Posterior cingulate gyrus (tissue), 11 donors: ENCODE measurements at regions of chr4 and their contacts with region 1.

Region 1: DNA sequence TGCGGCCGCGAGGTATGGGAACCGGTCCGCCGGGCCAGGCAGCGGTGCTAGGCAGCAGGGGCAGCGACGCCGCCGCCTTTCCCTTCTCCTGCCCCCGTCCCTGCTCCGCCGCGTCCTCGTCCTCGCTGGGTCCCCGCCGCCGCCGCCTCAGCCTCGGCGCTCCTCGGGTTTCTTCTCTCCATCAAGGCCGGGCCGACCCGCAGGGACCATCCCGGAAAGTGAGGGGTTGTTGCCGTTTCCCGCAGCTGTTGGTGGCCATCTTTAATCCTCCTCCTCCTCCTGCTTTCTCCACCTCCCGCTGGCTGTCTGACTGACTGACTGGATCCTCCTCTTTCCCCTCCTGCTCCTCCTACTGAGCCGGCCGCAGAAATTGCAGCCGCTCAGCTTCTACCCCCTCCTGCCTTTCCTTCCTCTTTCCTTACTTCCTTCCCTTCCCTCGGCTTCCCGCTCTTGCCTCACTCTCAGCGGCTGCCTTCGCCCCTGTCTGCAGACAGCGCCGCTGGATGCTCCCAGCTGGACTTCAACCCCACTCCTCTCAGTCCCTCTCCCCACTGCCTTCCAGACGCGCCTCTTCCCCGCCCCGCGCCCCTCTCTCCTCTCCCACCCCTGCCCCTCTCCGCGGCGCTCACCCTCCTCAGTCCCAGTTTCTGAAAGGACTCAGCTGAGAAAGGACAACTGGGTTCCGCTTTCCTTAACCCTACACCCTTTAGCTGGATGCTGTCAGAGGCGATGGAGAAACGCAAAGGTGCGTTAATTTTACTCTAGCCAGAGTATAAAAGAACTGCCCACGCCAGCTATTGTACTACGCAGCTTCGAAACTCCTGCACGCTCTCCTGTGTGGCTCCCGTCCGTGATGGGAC is at the start of gene WDFY3:
- DNase-seq: peak; percentile 73 to 97 (median 82)

Region 2: GRCh38 chr4:84503495-84504437 is 462.8 kb before region 1 on chr4:
- intact Hi-C with region 1: loop called (anchors 5 kb)
- DNase-seq: peak in 1 of 10 donors; percentile 84

Region 3: DNA sequence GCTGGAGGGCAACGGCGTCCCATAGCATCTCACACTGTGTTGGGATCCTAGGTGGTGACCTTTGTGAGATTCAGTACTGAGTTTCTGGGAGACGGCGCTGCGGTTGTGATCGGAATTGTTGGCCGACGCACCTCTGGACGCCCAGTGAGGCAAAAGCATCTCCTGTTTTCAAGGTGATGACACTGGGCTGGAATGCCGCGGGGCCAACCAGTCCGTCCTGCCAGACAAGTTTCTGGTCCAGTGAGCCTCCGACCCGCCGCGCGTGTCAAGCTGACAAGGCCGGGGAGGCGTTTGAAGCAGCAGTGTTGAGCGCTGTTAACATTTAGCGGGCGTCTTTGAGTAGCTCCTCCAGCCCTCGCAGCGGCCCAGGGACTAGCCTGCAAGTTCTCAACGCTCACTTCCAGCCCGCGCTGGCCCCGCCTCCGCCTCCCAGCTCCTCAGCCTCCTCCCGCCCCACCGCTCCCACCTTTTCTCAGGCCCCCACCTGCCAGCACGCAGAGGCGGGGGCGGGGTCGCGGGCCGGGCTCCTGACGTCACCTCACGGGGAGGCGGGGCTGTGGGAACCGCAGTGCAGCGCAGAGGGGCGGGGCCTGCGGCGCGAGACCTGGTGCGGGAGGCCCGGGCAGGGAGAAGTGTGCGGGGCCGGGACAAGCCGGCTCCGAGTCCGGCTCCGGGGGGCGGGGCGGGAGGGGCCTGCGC is 384.2 kb before region 1 on chr4:
- intact Hi-C with region 1: loop called (anchors 5 kb)
- DNase-seq: peak; percentile 83 to 99 (median 90)

Region 4: DNA sequence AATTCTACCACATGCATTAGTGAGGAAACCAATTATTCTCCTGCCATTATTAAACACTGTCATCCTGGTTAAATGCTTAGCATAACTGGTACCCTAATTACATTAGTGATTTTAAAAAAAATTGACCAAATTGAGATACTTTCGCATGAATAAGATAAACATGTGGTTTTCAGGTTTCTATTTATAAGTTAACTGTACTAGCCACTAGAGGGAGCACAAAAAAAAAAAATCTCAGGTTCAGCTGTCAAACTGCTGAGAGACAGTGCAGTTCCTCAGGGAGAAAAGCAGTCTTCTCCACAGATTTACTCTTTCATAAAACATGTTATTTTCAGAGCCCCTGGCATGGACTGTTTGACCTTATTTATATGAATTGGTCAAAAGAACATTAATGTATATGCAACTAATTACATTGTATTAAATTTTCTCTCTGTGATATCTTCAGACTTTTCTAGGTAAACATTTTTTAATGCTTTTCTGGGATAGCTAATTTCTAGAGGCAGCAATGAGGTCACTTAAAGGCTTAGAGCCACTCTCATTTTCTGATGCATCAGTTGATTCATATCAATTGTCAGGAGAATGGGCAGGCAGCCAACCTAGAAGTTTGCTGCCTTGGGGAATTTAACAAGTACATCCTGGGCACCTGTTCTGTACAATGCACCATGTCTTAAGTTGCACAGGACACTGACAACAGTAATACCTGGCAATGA is 216.2 kb before region 1 on chr4:
- intact Hi-C with region 1: loop called (anchors 1 kb)
- DNase-seq: no peak

Region 5: DNA sequence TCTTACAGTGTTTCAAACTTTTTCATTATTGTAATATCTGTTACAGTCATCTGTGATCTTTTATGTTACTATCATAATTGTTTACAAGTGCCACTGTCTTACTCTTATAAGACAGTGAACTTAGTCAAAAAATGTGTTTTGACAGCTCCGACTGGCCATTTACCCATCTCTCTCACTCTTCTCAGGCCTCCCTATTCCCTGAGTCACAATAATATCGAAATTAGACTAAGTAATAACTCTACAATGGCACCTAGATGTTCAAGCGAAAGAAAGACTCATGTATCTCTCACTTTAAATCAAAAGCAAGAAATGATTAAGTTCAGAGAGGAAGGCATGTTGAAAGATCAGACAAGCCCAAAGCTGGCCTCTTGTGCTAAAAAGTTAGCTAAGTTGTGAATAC is 199.4 kb before region 1 on chr4:
- intact Hi-C with region 1: no loop called
- DNase-seq: no peak

Region 6: DNA sequence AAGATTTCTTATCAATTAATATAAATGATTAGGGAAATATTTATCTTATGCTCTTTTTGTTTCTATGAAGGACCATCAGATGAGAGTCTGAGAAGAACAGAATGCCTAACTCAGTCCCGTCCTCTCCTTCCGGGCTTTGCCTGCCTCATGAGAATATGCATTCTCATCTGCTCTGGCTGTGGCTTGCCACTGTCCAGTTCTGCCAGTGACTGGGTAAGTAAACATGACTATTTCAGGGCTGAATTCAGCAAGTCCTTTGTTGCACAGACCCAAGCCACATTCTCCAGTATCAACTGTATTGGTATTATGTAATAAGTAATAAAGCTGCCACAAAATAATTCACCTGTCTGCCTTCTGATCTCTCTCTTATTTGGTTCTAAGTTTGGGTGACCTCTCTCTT is 110.8 kb before region 1 on chr4:
- intact Hi-C with region 1: loop called (anchors 5 kb)
- DNase-seq: peak in 8 of 10 donors; percentile 18 to 93 (median 45)

Region 7: GRCh38 chr4:84901173-84901572 is 65.4 kb before region 1 on chr4:
- intact Hi-C with region 1: no loop called
- DNase-seq: no peak

Region 8: DNA sequence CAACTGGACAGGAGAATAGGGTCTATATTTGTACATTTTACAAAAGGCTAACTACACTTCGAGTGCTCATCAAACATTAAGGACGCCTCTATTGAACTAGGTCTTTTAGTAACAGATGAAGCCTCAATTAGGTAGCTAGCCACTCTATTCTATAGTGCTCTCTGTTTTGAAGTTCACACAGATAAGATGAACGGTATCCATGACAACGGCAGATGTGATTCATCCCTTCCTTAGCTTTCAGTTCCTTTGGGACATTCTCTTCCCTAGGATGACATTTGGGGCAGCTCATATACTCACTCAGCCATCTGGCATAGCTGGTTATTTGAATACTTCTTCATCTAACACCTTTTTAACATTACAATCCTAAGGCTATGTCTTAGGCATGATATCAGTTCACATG is 62.3 kb after region 1 on chr4:
- intact Hi-C with region 1: no loop called
- DNase-seq: no peak

Region 9: DNA sequence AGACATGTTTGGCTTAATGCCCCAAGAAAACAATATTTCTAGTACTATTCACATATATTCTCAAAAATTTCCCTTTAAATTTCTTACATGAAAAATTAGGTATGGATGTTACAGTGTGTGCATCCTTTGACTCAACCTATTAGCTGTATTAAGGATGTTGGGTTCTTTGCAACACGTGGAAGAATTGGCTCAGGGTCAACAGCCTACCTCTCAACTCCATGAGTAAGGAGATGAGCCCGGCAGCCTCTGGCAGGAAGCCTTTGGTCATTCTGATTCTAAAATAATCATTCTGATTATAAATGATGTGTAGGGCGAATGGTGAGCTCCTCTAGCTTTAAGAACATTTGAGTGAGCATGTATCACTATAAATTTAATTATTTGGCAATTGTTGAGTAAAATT is 147.9 kb after region 1 on chr4:
- intact Hi-C with region 1: no loop called
- DNase-seq: no peak